ENCODE measurements at regions of chr3 and their contacts with region 1.

Region 1: DNA sequence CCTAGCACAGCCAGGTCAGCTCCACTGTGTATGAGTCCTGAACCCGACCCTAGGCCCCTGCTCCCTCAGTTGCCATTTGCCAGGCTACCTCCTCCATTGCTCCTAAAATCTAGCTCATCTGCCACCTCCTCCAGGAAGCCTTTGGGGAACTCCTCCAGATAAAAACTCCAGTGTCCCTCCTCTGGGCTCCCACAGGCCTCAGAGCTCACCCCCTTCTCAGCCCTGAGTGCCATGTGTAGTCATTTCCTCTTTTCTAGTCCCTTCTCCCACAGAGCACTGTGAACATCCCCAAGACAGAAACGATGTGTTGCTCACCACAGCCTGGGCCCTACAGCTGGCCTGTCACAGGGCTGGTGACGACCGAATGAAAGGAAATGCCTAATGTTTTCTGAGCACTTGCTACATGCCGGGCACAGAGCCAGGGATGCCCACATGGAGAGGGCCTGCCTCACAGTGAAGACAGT is 61.0 kb downstream of the IQSEC1 start:
- DNase-seq: peak; percentile 40
- H3K4me3 Mint-ChIP-seq: peak overlapping the region; percentile 74
- H3K27ac Mint-ChIP-seq: peak overlapping the region; percentile 99
- H3K4me1 Mint-ChIP-seq: peaks cover 71% of the 10 kb centered on the region
- H3K27me3 Mint-ChIP-seq: no peaks in the 10 kb centered on the region

Region 2: DNA sequence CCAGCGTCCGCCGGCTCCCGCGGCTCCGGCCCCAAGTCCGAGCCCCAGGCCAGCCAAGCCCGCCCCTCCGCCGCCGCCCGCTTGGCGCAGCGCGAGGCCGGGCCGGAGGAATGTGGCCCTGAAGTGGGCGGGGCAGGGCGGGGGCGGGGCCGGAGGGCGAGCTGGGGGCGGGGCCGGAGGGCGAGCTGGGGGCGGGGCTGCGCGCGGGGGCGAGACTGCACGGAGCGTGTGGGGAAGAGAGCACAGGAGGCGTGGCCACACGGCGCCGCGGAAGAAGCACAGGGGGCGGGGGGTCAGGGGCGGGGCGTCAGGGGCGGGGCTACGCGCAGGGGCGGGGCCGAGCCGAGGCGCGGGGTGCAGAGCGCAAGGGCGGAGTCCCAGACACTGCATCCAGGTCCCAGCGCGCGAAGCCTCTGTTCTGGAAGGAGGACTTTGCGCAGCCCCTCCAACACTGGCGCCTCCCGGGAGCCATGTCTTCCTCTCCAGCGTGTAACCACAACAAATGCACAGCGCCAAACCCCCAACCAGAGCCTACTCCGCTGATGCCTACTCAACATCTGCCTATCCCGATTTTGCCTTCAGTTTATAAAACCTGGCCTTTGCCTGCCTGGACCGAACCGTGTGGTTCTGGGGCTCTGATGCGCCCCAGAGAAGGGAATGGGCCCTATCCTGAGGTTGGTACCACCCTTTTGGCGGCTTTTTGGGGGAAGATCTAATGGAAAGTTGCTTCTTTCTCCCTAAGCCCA is 44.5 kb before region 1 on chr3:
- intact Hi-C with region 1: loop called (anchors 5 kb)
- DNase-seq: peak; percentile 85
- H3K4me3 Mint-ChIP-seq: peak overlapping the region; percentile 63
- H3K27ac Mint-ChIP-seq: no peak overlapping the region
- H3K4me1 Mint-ChIP-seq: peaks cover 37% of the 10 kb centered on the region
- H3K27me3 Mint-ChIP-seq: no peaks in the 10 kb centered on the region

Region 3: GRCh38 chr3:12994607-12995388 is 17.5 kb before region 1 on chr3:
- intact Hi-C with region 1: loop called (anchors 2 kb)
- DNase-seq: peak; percentile 76
- H3K4me3 Mint-ChIP-seq: peak overlapping the region; percentile 93
- H3K27ac Mint-ChIP-seq: peak overlapping the region; percentile 48
- H3K4me1 Mint-ChIP-seq: peaks cover 13% of the 10 kb centered on the region
- H3K27me3 Mint-ChIP-seq: no peaks in the 10 kb centered on the region

Region 4: DNA sequence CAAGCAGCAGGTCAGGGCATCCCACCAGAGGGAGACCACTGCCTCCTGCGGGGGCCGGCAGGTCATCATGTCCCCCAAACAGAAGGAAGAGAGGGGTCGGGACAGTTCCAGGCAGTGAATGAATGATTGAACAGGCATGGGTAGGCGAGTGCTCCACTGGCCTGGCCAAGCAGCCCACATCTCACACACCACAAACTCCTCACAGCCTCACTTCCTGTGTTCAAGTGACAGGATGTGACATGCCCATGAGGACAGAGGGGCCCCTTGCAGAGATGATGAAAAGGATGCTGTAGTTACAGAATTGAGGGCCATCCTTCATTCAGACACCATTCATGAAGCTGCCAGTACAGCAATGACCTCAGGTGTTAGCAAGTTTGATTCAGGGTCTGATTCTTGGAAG is 57.2 kb after region 1 on chr3:
- intact Hi-C with region 1: loop called (anchors 1 kb)
- DNase-seq: peak; percentile 59
- H3K4me3 Mint-ChIP-seq: peak overlapping the region; percentile 13
- H3K27ac Mint-ChIP-seq: peak overlapping the region; percentile 87
- H3K4me1 Mint-ChIP-seq: peaks cover 44% of the 10 kb centered on the region
- H3K27me3 Mint-ChIP-seq: peaks cover 8% of the 10 kb centered on the region

Region 5: GRCh38 chr3:13419505-13420044 is 407.3 kb after region 1 on chr3:
- intact Hi-C with region 1: loop called (anchors 5 kb)
- DNase-seq: peak; percentile 54
- H3K4me3 Mint-ChIP-seq: peak overlapping the region; percentile 86
- H3K27ac Mint-ChIP-seq: peak overlapping the region; percentile 89
- H3K4me1 Mint-ChIP-seq: peaks cover 64% of the 10 kb centered on the region
- H3K27me3 Mint-ChIP-seq: no peaks in the 10 kb centered on the region

Measured in activated T-helper 2 cell treated with anti-CD3 and anti-CD28 coated beads, Interferon-gamma antibody, Interleukin-2, Interleukin-4, amounts not matched to agents 10 μg/mL and 5 μg/mL and 100 μg/mL, durations not matched to agents 14 hours and 24 hours and 36 hours (primary cell).